Uterus (tissue), 4 donors: ENCODE measurements at regions of chr18 and their contacts with region 1.

Region 1: GRCh38 chr18:70205421-70206397 is at the start of gene RTTN:
- DNase-seq: peak; percentile 93
- H3K4me3 ChIP-seq: peak within 1 kb of the TSS; percentile 91 to 92
- H3K27ac ChIP-seq: peak within 1 kb of the TSS; percentile 95 to 99
- H3K4me1 ChIP-seq: no peaks in the 10 kb centered on the region
- H3K27me3 ChIP-seq: no peaks in the 10 kb centered on the region
- CTCF ChIP-seq: peak in 2 of 4 experiments; percentile 23 to 25
- POLR2A ChIP-seq: peak in 1 of 2 donors; percentile 46
- total RNA-seq, gene RTTN: 10.8 to 58.1 (median 22.4) TPM

Region 2: GRCh38 chr18:69935319-69936190 is 270.2 kb before region 1 on chr18:
- intact Hi-C with region 1: no loop called
- DNase-seq: no peak
- H3K4me3 ChIP-seq: no peak overlapping the region
- H3K27ac ChIP-seq: no peak overlapping the region
- H3K4me1 ChIP-seq: no peaks in the 10 kb centered on the region
- H3K27me3 ChIP-seq: no peaks in the 10 kb centered on the region
- CTCF ChIP-seq: no peak
- POLR2A ChIP-seq: no peak

Region 3: DNA sequence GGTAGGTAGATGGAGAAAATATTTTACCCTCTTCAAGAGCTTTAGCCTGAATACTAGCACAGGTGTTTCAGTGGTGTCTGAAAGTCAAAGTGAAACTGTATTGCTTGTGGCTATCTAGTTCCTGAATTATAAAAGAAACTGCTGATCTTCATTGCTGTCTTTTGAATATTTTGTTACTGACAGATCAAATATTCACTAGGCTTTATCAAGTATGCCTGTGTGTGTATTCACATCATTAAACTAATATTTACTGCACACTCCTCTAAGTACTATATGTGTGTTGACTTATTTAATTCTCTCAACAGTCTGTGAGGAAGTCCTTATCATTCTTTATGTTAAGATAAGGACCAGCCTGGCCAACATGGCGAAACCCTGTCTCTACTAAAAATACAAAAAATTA is 222.7 kb after region 1 on chr18:
- intact Hi-C with region 1: loop called (anchors 5 kb)
- DNase-seq: no peak
- H3K4me3 ChIP-seq: no peak overlapping the region
- H3K27ac ChIP-seq: no peak overlapping the region
- H3K4me1 ChIP-seq: no peaks in the 10 kb centered on the region
- H3K27me3 ChIP-seq: no peaks in the 10 kb centered on the region
- CTCF ChIP-seq: no peak
- POLR2A ChIP-seq: no peak